Panc1 (cell line): ENCODE measurements at regions of chr16 and their contacts with region 1.

Region 1: DNA sequence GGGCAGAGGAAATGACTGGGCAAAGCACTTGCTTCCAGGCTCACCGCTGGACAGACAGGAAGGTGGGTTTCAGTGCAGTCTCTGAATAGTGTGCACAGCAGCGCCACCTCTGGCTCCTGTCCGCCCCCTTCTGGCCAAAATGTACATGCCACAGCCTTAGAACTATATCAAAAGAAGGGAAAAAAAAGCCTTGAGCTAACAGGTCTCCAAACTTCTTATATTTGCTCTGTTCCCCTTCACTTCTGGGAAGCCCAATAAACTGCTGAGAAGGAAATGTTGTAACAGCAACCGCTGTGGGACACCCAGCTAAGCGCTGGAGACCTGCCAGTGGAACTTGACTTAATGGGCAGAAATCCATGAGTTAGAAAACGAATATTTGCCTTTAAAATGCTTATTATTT is 17.5 kb downstream of the COG7 start:
- DNase-seq: no peak
- ATAC-seq: peak; percentile 94
- H3K4me3 ChIP-seq: no peak overlapping the region
- H3K27ac ChIP-seq: no peak overlapping the region
- H3K4me1 ChIP-seq: peaks cover 3% of the 10 kb centered on the region
- H3K27me3 ChIP-seq: no peaks in the 10 kb centered on the region
- CTCF ChIP-seq: peak; percentile 97

Region 2: DNA sequence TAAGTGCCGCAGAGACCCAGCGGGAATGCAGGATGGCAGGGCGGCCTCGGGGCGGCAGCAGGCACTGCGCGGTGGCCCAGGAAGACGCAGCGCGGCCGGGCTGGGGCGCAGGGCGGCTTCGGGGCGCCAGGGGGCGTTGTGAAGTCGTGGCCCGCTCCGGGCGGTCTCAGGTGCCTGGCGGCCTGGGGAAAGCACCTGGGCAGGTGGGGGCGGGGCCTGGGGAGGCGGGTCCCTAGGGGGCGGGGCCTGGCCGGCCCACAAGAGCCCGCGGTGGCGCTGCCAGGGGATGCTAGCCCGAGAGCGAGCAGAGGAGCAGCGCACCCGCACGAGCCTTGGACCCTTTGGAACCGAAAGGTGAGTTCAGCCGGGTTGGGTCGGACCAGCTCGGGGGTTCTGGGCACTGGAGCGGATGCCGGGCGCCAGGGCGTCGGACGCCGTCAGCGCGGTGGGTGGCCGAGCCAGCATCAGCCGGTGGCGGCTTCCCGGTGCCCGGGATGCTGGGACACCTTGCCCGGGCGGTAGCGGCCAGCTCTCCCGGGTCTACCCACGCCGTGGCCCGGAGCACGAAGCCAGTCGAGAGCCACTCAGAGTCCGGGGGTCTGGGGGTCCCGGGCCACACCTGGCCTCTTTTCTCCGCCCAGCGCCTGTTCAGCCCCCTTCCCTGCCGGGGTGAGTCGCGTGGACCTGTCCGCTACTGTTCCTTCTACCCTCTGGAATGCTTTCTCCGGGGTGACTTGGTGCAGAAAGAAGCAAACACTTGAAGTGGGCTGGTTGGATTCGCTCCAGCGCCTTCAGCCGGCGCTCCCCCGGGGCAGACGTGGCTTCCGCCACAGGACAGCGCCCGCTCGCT is 252.8 kb before region 1 on chr16 and contains the start of gene SCNN1G:
- CTCF ChIA-PET with region 1: interaction called, 19 read pairs
- POLR2A ChIA-PET with region 1: no interaction called
- in situ Hi-C with region 1: no loop called
- intact Hi-C with region 1: loop called (anchors 1 kb)
- DNase-seq: peak; percentile 33
- ATAC-seq: peak; percentile 99
- H3K4me3 ChIP-seq: peak within 1 kb of the TSS; percentile 42 to 49
- H3K27ac ChIP-seq: peak within 1 kb of the TSS; percentile 11; the same call in 1 of the 2 replicates
- H3K4me1 ChIP-seq: peaks cover 8% of the 10 kb centered on the region
- H3K27me3 ChIP-seq: peaks cover 12% of the 10 kb centered on the region; the same call in 1 of the 2 replicates
- CTCF ChIP-seq: peak; percentile 100
- total RNA-seq, gene SCNN1G: 3.4 TPM

Region 3: GRCh38 chr16:23296994-23297393 is 138.5 kb before region 1 on chr16:
- CTCF ChIA-PET with region 1: interaction called, 3 read pairs
- POLR2A ChIA-PET with region 1: no interaction called
- in situ Hi-C with region 1: no loop called
- intact Hi-C with region 1: loop called (anchors 10 kb)
- DNase-seq: no peak
- ATAC-seq: peak; percentile 82
- H3K4me3 ChIP-seq: no peak overlapping the region
- H3K27ac ChIP-seq: no peak overlapping the region
- H3K4me1 ChIP-seq: no peaks in the 10 kb centered on the region
- H3K27me3 ChIP-seq: no peaks in the 10 kb centered on the region; the same call in 1 of the 2 replicates
- CTCF ChIP-seq: peak; percentile 40

Region 4: GRCh38 chr16:23423496-23424049 is 11.9 kb before region 1 on chr16:
- CTCF ChIA-PET with region 1: interaction called, 10 read pairs
- POLR2A ChIA-PET with region 1: no interaction called
- in situ Hi-C with region 1: no loop called
- intact Hi-C with region 1: no loop called
- DNase-seq: peak; percentile 86
- ATAC-seq: peak; percentile 97
- H3K4me3 ChIP-seq: peak overlapping the region in 1 of 2 experiments; percentile 11; a peak in 1 of 4 replicates
- H3K27ac ChIP-seq: peak overlapping the region; percentile 84
- H3K4me1 ChIP-seq: peaks cover 34% of the 10 kb centered on the region
- H3K27me3 ChIP-seq: no peaks in the 10 kb centered on the region
- CTCF ChIP-seq: no peak

Region 5: DNA sequence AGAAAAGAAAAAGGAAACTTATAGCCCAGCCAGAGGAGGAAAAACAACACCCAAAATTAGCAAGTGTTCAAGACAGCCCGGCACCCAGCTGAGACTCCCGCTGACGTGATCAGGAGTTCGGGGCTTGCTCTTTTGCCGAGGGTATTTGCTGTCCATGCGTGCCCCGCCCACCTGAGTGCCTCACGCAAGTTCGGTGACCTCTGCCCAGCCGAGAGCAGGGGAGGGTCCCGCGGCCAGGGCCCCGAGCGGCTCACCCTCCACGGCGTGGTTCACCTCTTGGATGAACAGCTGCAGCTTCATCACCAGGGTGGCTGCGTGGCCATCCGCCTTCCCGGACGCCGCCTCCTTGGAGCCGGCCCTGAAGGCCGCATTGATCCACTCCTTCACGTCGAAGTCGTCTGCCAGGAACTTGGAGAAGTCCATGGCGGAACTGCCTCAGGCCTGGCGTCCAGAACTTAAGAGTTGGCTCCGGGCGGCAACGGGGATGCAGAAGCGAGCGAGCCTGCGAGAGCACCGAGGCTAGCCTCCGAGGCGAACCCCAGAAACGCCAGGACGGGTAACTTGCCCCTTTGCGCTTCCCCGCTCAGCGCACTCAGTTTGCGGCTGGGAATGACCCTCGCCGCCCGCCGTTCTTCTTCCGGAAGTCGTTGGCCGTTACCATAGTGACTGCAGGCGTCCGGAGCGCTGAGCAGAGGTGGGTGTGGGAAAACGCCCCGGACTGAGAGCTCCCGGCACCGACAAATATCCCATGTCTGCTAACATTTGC is 17.3 kb after region 1 on chr16 and contains the start of gene COG7:
- CTCF ChIA-PET with region 1: interaction called, 3 read pairs
- POLR2A ChIA-PET with region 1: interaction called, 14 read pairs
- in situ Hi-C with region 1: no loop called
- intact Hi-C with region 1: no loop called
- DNase-seq: peak; percentile 70
- ATAC-seq: peak; percentile 97
- H3K4me3 ChIP-seq: peak within 1 kb of the TSS; percentile 71 to 95
- H3K27ac ChIP-seq: peak within 1 kb of the TSS; percentile 77
- H3K4me1 ChIP-seq: peaks cover 8% of the 10 kb centered on the region
- H3K27me3 ChIP-seq: no peaks in the 10 kb centered on the region
- CTCF ChIP-seq: no peak
- total RNA-seq, gene COG7: 25.3 TPM